ENCODE measurements at regions of chr16 and their contacts with region 1.

Region 1: DNA sequence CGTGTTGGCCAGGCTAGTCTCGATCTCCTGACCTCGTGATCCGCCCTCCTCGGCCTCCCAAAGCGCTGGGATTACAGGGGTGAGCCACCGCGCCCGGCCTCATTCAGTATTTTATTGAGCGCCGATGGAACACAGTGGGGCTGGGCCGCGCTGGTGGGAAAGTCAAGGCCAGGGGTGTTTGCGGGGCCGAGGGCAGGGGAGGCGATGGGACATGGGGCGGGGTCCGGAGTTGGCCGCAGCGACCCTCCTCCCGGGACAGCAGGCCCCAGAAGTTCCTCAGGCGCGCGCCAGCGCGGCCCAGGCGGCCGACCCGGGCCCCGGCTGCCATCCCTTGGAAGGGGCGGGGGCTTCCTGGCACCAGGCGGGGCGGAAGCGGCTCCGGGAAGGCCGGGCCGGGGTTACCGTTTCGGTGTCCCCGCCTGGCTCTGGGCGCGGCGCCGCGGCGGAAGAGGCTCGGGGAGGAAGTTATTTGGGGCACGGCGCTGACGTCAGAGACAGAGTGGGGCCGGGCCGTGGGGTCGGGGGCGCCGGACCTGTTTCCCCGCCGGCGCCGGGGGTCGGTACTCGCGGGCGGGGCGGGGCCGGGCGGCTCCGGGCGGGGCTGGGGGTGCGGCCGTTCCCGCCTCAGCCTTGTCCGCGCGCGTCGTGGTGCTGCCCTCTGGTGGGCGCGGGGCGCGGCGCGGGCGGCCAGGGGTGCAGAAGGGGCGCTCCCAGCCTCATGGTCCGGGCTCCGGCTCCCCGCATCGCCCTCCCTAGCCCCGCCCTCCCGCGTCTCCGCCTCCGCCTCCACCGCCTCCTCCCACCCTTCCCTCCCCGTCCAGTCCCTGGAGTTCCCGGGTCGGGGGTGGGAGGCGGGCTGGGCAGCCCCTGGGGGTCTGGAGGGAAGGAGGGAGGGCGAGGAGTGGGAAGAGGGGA is 952 bp upstream of the PRSS27 start:
- DNase-seq: peak; percentile 75 to 85 (median 84)
- H3K4me3 ChIP-seq: peak overlapping the region; percentile 50 to 79 (median 52)
- H3K4me3 Mint-ChIP-seq: peak overlapping the region; percentile 79 to 83
- H3K27ac ChIP-seq: peak overlapping the region in 1 of 2 donors; percentile 61
- H3K27ac Mint-ChIP-seq: peak overlapping the region in 6 of 7 donors; percentile 62 to 93 (median 80)
- H3K4me1 ChIP-seq: peaks cover 5 to 15% of the 10 kb centered on the region in 2 donors
- H3K4me1 Mint-ChIP-seq: peaks cover 7% of the 10 kb centered on the region
- H3K27me3 ChIP-seq: no peaks in the 10 kb centered on the region
- H3K27me3 Mint-ChIP-seq: peaks cover 4 to 18% (median 11%) of the 10 kb centered on the region in 3 donors
- CTCF ChIP-seq: peak; percentile 98

Region 2: GRCh38 chr16:1342526-1343427 is 1378.2 kb before region 1 on chr16:
- intact Hi-C with region 1: no loop called
- DNase-seq: peak; percentile 99
- H3K4me3 ChIP-seq: peak overlapping the region in 1 of 3 experiments; percentile 60
- H3K4me3 Mint-ChIP-seq: peak overlapping the region; percentile 58 to 80
- H3K27ac ChIP-seq: no peak overlapping the region
- H3K27ac Mint-ChIP-seq: no peak overlapping the region
- H3K4me1 ChIP-seq: peaks cover 12 to 17% of the 10 kb centered on the region in 2 donors
- H3K4me1 Mint-ChIP-seq: peaks cover 12% of the 10 kb centered on the region
- H3K27me3 ChIP-seq: no peaks in the 10 kb centered on the region
- H3K27me3 Mint-ChIP-seq: peaks cover 2 to 11% (median 6%) of the 10 kb centered on the region in 3 donors
- CTCF ChIP-seq: no peak

Region 3: GRCh38 chr16:2673066-2673999 is 47.6 kb before region 1 on chr16:
- intact Hi-C with region 1: loop called in 1 of 2 experiments (anchors 5 kb)
- DNase-seq: peak; percentile 92 to 96 (median 94)
- H3K4me3 ChIP-seq: peak overlapping the region; percentile 68 to 82 (median 81)
- H3K4me3 Mint-ChIP-seq: peak overlapping the region; percentile 79 to 80
- H3K27ac ChIP-seq: peak overlapping the region; percentile 86
- H3K27ac Mint-ChIP-seq: peak overlapping the region; percentile 88 to 97 (median 95)
- H3K4me1 ChIP-seq: peaks cover 32 to 34% of the 10 kb centered on the region in 2 donors
- H3K4me1 Mint-ChIP-seq: peaks cover 46% of the 10 kb centered on the region
- H3K27me3 ChIP-seq: no peaks in the 10 kb centered on the region
- H3K27me3 Mint-ChIP-seq: peaks cover 0 to 2% (median 0%) of the 10 kb centered on the region in 3 donors
- CTCF ChIP-seq: no peak

Region 4: GRCh38 chr16:2777231-2777902 is 56.4 kb after region 1 on chr16 and contains the start of gene ELOB:
- intact Hi-C with region 1: no loop called
- DNase-seq: peak; percentile 67 to 79 (median 76)
- H3K4me3 ChIP-seq: peak within 1 kb of the TSS; percentile 94 to 98 (median 97)
- H3K4me3 Mint-ChIP-seq: peak within 1 kb of the TSS; percentile 91 to 97
- H3K27ac ChIP-seq: peak within 1 kb of the TSS; percentile 92 to 99
- H3K27ac Mint-ChIP-seq: peak within 1 kb of the TSS; percentile 93 to 98 (median 96)
- H3K4me1 ChIP-seq: peaks cover 32 to 37% of the 10 kb centered on the region in 2 donors
- H3K4me1 Mint-ChIP-seq: peaks cover 41% of the 10 kb centered on the region
- H3K27me3 ChIP-seq: no peaks in the 10 kb centered on the region
- H3K27me3 Mint-ChIP-seq: peaks cover 0 to 11% (median 5%) of the 10 kb centered on the region in 3 donors
- CTCF ChIP-seq: no peak
- polyA plus RNA-seq, gene ELOB: 150 to 405 (median 363) TPM

Measured in CD14-positive monocyte (primary cell).